Activated naive CD4-positive, alpha-beta T cell treated with anti-CD3 and anti-CD28 coated beads for 36 hours (primary cell): ENCODE measurements at regions of chr12 and their contacts with region 1.

Region 1: DNA sequence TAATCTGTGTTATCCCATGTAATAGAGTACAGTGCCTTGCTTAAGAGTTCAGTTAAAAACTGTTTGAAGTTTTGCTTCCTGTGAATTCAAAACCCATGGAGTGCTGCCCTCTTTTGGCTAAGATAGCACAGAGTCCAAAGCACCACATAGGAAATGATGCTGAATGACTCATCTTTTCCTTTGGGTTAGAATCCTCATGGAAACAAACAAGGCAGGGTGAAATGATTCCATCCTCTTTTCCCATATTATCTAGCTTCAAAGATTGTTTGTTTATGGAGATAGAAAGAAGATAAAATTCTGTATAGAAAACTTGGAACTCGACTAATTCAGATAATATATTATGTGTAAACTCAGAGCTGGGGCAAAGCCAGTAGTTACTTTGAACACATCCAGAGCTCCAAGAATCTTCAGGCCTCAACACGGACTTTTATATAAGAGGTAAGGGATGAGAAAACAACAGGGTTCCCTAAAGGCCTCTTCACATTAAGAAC is 87.4 kb downstream of the OTOGL start:
- DNase-seq: peak; percentile 50
- H3K4me3 Mint-ChIP-seq: no peak overlapping the region
- H3K27ac Mint-ChIP-seq: no peak overlapping the region
- H3K4me1 Mint-ChIP-seq: no peaks in the 10 kb centered on the region
- H3K27me3 Mint-ChIP-seq: no peaks in the 10 kb centered on the region

Region 2: GRCh38 chr12:79547735-79548609 is 638.8 kb before region 1 on chr12:
- CTCF ChIA-PET with region 1: no interaction called
- intact Hi-C with region 1: loop called (anchors 1 kb)
- DNase-seq: peak; percentile 45
- H3K4me3 Mint-ChIP-seq: no peak overlapping the region
- H3K27ac Mint-ChIP-seq: no peak overlapping the region
- H3K4me1 Mint-ChIP-seq: no peaks in the 10 kb centered on the region
- H3K27me3 Mint-ChIP-seq: no peaks in the 10 kb centered on the region

Region 3: DNA sequence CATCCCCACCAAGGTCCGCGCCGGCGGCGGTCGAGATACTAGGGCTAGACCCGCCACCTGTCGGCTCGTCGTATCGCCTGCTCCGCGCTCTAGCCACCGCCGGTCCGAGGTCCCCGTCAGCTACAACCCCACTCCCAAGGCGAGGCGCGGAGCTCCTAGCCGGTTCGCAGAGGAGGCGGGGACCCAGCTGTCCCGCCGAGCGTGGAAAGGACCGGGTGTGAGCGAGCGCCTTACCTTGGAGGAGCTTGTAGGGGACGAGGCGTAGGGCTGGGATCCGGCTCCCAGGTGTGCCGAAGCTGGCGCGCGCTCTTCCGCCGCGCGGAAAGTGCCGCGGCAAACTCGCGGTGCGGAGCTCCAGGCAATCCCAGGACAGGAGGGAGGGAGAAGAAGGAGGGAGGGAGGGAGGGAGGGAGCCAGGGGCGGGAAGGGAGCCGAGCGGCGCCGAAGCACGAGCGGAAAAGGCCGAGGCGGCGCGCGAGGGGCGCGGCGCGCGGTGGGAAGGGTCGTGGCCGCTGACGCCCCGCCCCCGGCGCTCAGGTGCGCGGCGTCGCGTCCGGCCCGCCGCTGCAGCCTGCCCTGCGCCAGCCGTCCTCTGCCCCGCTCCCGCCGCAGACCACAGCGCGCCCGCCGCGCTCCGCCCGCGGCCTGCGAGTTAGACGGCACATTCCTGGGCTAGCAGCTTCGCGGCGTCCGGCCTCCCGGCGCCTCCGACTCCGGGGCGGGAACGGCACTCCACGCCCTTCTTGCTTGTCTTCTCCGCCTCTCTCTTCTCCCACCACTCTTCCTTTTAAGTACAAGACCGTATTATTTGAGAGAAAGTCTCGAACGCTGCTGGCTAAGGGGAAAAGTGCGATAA is 495.9 kb before region 1 on chr12 and contains the start of gene PAWR:
- CTCF ChIA-PET with region 1: no interaction called
- intact Hi-C with region 1: loop called (anchors 1 kb)
- DNase-seq: peak; percentile 32
- H3K4me3 Mint-ChIP-seq: peak within 1 kb of the TSS; percentile 72
- H3K27ac Mint-ChIP-seq: no peak within 1 kb of the TSS
- H3K4me1 Mint-ChIP-seq: peaks cover 7% of the 10 kb centered on the region
- H3K27me3 Mint-ChIP-seq: peaks cover 46% of the 10 kb centered on the region
- total RNA-seq, gene PAWR: 5.2 to 5.6 TPM

Region 4: GRCh38 chr12:79886917-79887519 is 299.8 kb before region 1 on chr12:
- CTCF ChIA-PET with region 1: interaction called, 3 read pairs
- intact Hi-C with region 1: loop called (anchors 1 kb)
- DNase-seq: no peak
- H3K4me3 Mint-ChIP-seq: no peak overlapping the region
- H3K27ac Mint-ChIP-seq: no peak overlapping the region
- H3K4me1 Mint-ChIP-seq: peaks cover 71% of the 10 kb centered on the region
- H3K27me3 Mint-ChIP-seq: no peaks in the 10 kb centered on the region

Region 5: GRCh38 chr12:80053048-80053790 is 133.6 kb before region 1 on chr12:
- CTCF ChIA-PET with region 1: no interaction called
- intact Hi-C with region 1: loop called (anchors 1 kb)
- DNase-seq: no peak
- H3K4me3 Mint-ChIP-seq: no peak overlapping the region
- H3K27ac Mint-ChIP-seq: no peak overlapping the region
- H3K4me1 Mint-ChIP-seq: peaks cover 4% of the 10 kb centered on the region
- H3K27me3 Mint-ChIP-seq: peaks cover 1% of the 10 kb centered on the region

Region 6: GRCh38 chr12:80154261-80154660 is 32.5 kb before region 1 on chr12:
- CTCF ChIA-PET with region 1: no interaction called
- intact Hi-C with region 1: no loop called
- DNase-seq: no peak
- H3K4me3 Mint-ChIP-seq: no peak overlapping the region
- H3K27ac Mint-ChIP-seq: no peak overlapping the region
- H3K4me1 Mint-ChIP-seq: no peaks in the 10 kb centered on the region
- H3K27me3 Mint-ChIP-seq: no peaks in the 10 kb centered on the region

Region 7: GRCh38 chr12:80441921-80442320 is 255.1 kb after region 1 on chr12:
- CTCF ChIA-PET with region 1: no interaction called
- intact Hi-C with region 1: no loop called
- DNase-seq: no peak
- H3K4me3 Mint-ChIP-seq: no peak overlapping the region
- H3K27ac Mint-ChIP-seq: no peak overlapping the region
- H3K4me1 Mint-ChIP-seq: no peaks in the 10 kb centered on the region
- H3K27me3 Mint-ChIP-seq: no peaks in the 10 kb centered on the region